ENCODE measurements at regions of chr6 and their contacts with region 1.

Region 1: DNA sequence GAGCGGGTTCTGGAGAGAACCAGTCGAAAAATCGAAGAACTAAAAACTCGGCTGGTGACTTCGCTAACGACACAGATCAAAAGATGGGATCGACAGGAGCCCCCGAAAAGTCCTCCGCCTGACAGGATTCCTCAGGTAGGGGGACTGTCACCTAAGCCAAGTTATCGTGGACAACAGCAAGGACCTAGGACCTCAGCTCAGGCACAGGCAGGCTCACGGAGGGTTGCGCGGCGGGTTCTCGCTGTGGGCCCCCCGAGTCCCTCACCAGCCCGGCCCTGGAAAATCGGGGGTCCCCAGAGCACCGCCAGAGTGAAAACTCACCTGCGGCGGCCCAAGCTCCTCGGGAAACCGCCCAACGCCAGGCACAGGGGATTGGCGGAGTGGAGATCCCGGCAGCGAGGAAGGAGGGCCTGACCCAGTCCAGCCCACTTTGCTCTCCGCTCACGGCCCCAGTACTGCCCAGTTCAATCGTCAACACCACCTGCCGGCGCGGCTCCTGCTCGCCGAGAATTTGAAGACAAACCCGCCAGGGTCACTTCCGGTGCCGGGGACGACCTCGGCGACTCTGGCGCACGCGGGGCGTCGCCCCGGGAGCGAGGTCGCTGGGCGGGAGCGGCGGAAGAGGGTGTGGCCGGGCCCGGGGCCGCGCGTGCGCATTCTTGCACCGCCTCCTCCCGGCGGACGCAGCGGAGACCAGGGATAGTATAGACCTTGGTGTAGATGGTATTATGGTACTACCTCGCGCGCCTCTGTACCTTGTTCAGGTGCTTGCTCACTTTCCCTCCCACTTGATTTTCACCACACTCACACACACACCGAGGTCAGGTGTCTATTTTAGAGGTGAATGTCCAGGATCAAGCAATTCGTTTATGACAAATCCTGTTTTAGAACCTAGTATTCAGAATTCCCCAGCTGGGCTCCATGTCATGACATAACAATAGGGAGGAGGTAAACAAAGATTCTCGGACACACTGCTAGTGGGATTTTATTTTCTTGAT is at the start of gene KATNA1:
- DNase-seq: peak; percentile 89
- H3K4me3 Mint-ChIP-seq: peak within 1 kb of the TSS; percentile 75
- H3K27ac Mint-ChIP-seq: peak within 1 kb of the TSS; percentile 67
- H3K4me1 Mint-ChIP-seq: no peaks in the 10 kb centered on the region
- H3K27me3 Mint-ChIP-seq: no peaks in the 10 kb centered on the region
- CTCF ChIP-seq: no peak
- total RNA-seq, gene KATNA1: 9.9 and 13.1 TPM in 2 replicates

Region 2: DNA sequence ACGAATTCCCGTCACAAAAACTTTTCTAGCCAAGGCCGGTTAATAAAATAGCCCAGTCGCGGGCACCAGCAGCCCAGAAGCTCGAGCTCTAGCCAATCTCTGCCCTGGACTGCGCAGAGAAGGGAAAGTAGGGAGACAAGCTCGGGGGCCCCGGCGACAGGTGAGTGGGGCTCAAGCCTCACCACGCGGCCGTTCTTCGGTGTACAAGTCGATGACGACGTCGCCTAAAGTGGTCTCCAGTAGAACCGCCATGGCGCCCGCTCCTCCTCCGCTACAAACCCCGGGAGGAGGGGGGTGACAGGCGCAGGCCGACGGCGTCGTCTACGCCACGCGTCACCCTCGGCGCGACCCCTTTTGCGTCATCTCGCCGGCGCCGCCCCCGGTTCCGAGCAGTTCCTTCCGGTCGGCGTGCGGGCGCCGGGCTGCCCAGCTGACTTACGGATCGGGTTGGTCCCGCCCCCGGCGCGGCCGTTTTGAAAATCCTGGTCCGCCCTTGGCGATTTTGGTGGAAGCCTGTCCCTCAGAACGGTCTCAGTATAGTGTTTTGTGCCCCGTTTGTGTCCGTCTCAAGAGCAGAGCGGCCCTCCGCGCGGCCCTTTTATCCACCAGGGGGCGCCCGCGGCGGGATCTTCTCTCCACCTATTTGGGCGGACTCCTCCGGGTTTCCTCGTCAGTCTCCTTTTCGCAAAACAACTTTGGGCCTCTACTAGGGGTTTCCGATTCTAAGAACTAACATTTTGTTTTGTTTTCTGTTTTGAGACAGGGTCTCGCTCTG is 102.5 kb before region 1 on chr6 and contains the start of gene PPIL4:
- CTCF ChIA-PET with region 1: no interaction called
- intact Hi-C with region 1: loop called (anchors 5 kb)
- DNase-seq: peak; percentile 93
- H3K4me3 Mint-ChIP-seq: peak within 1 kb of the TSS; percentile 84
- H3K27ac Mint-ChIP-seq: peak within 1 kb of the TSS; percentile 90
- H3K4me1 Mint-ChIP-seq: peaks cover 10% of the 10 kb centered on the region
- H3K27me3 Mint-ChIP-seq: peaks cover 13% of the 10 kb centered on the region
- CTCF ChIP-seq: peak; percentile 82
- total RNA-seq, gene PPIL4: 21.5 and 22.6 TPM in 2 replicates

Region 3: DNA sequence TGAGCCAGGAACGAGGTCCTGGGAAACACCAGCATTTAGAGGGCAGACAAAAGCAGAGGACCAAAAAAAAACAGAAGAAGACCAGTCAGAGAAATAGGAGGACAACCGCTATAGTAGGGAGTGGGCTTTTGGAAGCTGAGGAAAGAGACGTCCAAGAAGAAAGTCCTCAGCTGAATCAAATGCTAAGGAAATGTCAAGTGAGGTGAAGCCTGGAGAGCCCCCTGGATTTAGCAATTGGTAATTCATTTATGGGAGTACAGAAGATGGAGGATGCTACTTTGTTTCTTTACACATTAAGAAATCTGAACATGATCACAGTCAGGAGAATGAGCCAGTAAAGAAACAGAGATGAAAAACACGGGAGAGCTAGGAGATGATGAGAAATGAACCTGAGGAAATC is 174.6 kb after region 1 on chr6:
- CTCF ChIA-PET with region 1: no interaction called
- intact Hi-C with region 1: no loop called
- DNase-seq: no peak
- H3K4me3 Mint-ChIP-seq: no peak overlapping the region
- H3K27ac Mint-ChIP-seq: no peak overlapping the region
- H3K4me1 Mint-ChIP-seq: no peaks in the 10 kb centered on the region
- H3K27me3 Mint-ChIP-seq: no peaks in the 10 kb centered on the region
- CTCF ChIP-seq: no peak